ENCODE measurements at regions of chr1 and their contacts with region 1.

Region 1: DNA sequence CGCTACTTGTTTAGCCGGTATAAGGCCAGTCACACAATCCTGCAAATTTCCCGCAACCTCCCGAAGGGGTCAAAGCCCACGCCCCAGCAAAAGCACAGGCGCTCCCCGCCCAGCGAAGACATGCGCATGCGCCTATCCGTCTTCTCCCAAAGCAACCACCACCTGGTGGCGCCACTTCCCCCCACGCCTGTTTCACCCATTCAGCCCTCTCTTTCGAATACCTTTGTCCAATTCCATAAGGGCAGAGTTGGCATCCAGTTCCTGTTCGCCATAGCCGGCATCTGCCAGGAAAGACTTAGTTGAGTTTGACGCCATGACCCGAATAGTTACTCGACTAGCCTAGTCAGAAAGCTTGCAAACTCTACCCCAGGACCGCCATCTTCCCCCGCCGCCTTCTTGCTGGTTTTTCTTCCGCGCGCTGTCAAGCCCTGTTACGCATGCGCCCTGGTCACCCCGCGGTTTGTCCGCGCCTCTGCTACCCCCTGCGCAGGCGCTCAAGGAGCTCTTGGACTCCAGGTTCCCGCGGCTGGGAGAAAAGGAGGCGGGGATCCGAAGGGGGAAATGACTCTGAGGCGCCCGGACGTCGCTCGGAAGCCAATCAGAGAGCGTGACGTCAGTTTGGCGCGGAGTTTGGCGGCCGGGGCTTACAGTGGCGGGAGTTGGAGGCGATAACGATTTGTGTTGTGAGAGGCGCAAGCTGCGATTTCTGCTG is at the starts of genes DTL and INTS7:
- DNase-seq: peak; percentile 98 to 100 (median 99)
- ATAC-seq: peak; percentile 91 to 97 (median 96)
- H3K4me3 ChIP-seq: peak within 1 kb of the TSS; percentile 38 to 65 (median 46)
- H3K27ac ChIP-seq: peak within 1 kb of the TSS; percentile 71 to 88 (median 80)
- H3K4me1 ChIP-seq: peaks cover 0 to 18% (median 4%) of the 10 kb centered on the region in 3 donors
- H3K27me3 ChIP-seq: no peaks in the 10 kb centered on the region
- CTCF ChIP-seq: peak; percentile 75 to 92 (median 89)
- total RNA-seq, gene DTL: 0.05 to 1.1 (median 0.49) TPM
- total RNA-seq, gene INTS7: 3.3 to 10.1 (median 5.3) TPM

Region 2: GRCh38 chr1:211680752-211681327 is 354.4 kb before region 1 on chr1:
- intact Hi-C with region 1: loop called in 1 of 3 experiments (anchors 10 kb)
- DNase-seq: peak; percentile 59 to 82 (median 63)
- ATAC-seq: peak; percentile 90 to 97 (median 96)
- H3K4me3 ChIP-seq: no peak overlapping the region
- H3K27ac ChIP-seq: no peak overlapping the region
- H3K4me1 ChIP-seq: no peaks in the 10 kb centered on the region
- H3K27me3 ChIP-seq: no peaks in the 10 kb centered on the region
- CTCF ChIP-seq: peak; percentile 9 to 63 (median 48)